Activated CD4-positive, alpha-beta T cell treated with anti-CD3 and anti-CD28 coated beads for 36 hours (primary cell): ENCODE measurements at regions of chr2 and their contacts with region 1.

Region 1: GRCh38 chr2:26959331-26959730 is 11.1 kb upstream of the MAPRE3 start:
- DNase-seq: no peak
- ATAC-seq: no peak
- H3K4me3 Mint-ChIP-seq: no peak overlapping the region
- H3K27ac Mint-ChIP-seq: no peak overlapping the region
- H3K4me1 Mint-ChIP-seq: no peaks in the 10 kb centered on the region
- H3K27me3 Mint-ChIP-seq: peaks cover 27% of the 10 kb centered on the region

Region 2: DNA sequence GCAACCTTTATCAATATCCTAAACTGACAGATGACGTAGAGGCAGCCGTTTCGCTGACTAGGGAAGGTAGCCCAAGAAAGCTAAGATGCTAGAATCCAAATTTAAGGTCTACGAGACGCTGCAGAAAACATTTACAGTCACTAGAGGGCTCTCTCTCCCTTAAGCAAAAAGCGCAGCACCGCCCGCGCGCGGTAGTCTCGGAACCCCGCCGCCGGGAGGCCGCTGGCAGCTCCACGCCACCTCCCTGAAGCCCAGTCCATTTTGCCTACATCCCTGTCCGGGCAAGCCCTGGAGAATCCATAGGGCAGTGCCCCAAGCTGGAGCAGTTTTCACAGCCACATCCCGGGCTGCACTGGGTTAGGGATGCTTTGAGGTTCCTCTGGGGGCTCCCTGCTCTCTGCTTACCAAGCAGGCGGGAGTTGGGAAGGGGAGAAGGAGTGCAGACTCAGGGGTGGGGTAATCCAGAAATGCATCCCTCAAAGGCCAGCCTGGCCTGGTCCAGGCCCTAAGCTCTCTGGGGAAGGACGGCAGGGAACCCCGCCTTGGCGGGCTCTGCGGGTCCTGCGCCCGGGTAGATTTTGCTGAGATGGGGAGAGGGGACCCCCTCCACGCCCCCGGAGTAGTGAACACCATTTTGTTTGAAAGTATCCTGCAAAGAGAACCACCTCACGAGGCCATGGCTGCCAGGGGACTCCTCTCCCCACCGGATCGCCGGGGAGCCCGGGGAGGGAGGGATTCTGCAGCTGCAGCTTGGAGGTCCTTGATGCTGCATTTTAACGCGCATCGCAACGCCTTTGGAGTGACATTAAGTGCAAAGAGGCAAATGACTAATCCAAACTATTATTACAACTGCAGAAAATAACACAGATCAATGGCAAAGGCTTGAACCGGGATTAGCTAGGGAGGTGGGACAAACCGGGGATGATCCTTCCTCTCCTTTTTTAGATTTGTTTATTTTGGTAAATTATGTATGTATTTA is 112.7 kb before region 1 on chr2:
- CTCF ChIA-PET with region 1: interaction called, 10 read pairs
- POLR2A ChIA-PET with region 1: no interaction called
- intact Hi-C with region 1: no loop called
- DNase-seq: peak; percentile 80
- ATAC-seq: peak; percentile 75
- H3K4me3 Mint-ChIP-seq: peak overlapping the region; percentile 36
- H3K27ac Mint-ChIP-seq: no peak overlapping the region
- H3K4me1 Mint-ChIP-seq: peaks cover 11% of the 10 kb centered on the region
- H3K27me3 Mint-ChIP-seq: peaks cover 42% of the 10 kb centered on the region

Region 3: DNA sequence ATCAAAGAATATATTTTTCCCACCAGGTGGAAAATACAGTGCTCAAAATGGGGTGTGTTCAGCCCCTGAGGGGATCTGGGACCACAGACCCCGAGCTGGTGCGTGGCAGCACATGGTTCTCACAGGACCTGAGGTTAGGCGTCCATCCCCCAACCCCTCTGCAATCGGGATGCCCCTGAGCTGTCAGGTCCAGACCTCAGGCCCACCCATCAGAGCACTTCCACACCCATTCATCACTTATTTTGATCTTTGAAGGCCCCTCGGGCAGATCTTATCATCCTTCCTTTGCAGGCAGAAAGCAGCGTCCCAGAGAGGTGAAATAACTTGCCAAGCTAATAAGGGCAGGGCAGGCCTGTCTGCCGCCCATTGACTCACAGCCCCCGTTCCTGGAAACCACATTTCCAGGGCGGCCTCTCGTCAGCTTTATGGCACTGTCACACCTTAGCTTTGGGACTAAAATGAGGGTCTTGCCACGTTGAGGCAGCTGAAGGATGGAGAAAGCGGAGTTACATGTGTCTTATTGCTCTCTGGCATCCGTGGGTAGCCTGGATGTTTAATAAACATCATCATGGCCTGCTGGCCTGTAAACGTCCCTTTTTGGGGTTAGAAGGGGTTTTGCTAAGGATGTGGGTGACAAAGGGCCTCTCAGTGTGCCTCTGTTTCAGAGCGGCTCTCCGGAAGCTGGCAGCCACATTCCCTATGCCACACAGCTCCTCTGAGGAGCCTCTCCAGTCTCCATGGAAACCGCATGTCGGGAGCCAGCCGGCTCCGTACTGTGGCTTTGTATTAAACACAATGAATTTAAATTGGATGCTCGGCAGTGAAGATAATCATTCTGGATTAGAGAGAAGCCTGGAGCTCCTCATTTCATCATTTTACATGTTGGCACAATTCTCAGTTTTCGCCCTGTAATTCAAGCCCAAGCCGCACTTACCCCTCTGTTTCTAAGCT is 47.1 kb before region 1 on chr2:
- CTCF ChIA-PET with region 1: no interaction called
- POLR2A ChIA-PET with region 1: no interaction called
- intact Hi-C with region 1: no loop called
- DNase-seq: no peak
- ATAC-seq: no peak
- H3K4me3 Mint-ChIP-seq: no peak overlapping the region
- H3K27ac Mint-ChIP-seq: no peak overlapping the region
- H3K4me1 Mint-ChIP-seq: no peaks in the 10 kb centered on the region
- H3K27me3 Mint-ChIP-seq: peaks cover 12% of the 10 kb centered on the region

Region 4: GRCh38 chr2:26976237-26976636 is 16.9 kb after region 1 on chr2:
- CTCF ChIA-PET with region 1: interaction called, 15 read pairs
- POLR2A ChIA-PET with region 1: no interaction called
- intact Hi-C with region 1: no loop called
- DNase-seq: no peak
- ATAC-seq: no peak
- H3K4me3 Mint-ChIP-seq: no peak overlapping the region
- H3K27ac Mint-ChIP-seq: no peak overlapping the region
- H3K4me1 Mint-ChIP-seq: peaks cover 6% of the 10 kb centered on the region
- H3K27me3 Mint-ChIP-seq: no peaks in the 10 kb centered on the region

Region 5: GRCh38 chr2:27016801-27017325 is 57.5 kb after region 1 on chr2:
- CTCF ChIA-PET with region 1: interaction called, 129 read pairs
- POLR2A ChIA-PET with region 1: no interaction called
- intact Hi-C with region 1: loop called (anchors 1 kb)
- DNase-seq: peak; percentile 69
- ATAC-seq: peak; percentile 55
- H3K4me3 Mint-ChIP-seq: no peak overlapping the region
- H3K27ac Mint-ChIP-seq: no peak overlapping the region
- H3K4me1 Mint-ChIP-seq: no peaks in the 10 kb centered on the region
- H3K27me3 Mint-ChIP-seq: no peaks in the 10 kb centered on the region

Region 6: GRCh38 chr2:27086090-27086723 is 126.9 kb after region 1 on chr2:
- CTCF ChIA-PET with region 1: interaction called, 4 read pairs
- POLR2A ChIA-PET with region 1: no interaction called
- intact Hi-C with region 1: loop called (anchors 1 to 5 kb)
- DNase-seq: peak; percentile 98
- ATAC-seq: peak; percentile 89
- H3K4me3 Mint-ChIP-seq: peak overlapping the region; percentile 77
- H3K27ac Mint-ChIP-seq: peak overlapping the region; percentile 82
- H3K4me1 Mint-ChIP-seq: peaks cover 24% of the 10 kb centered on the region
- H3K27me3 Mint-ChIP-seq: no peaks in the 10 kb centered on the region

Region 7: DNA sequence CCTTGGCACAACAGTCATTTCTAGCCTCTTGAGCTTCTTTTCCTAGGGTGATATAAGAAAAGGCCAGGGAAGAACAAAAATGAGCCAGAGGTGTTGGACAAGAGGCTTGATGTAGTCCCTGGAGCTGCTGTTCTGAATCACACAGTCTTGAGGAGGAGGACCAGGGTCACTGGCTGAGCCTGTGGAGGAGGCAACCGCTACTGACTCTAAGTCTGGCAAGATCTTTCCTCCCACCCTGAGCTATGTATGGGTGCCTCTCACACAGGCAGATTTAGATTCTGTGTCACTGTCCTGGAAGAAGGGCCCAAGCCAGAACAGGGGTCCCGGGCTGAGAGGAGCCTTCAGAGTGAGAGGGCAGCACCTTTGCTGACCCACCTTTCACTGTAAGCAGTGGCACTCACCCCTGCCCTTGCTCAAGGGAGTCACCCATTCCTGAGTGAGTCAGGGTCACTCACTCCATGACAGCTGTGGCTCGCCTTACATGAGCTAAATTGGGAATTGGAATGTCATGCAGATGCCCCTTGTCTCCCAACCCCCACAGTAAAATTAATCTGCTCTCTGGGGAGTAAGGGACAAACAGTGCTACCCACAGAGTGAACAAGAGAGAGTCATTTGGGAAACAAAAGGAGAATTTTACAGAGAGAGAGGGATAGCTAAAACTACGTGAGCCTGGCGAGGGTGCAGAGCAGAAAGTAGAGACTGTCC is 322.7 kb after region 1 on chr2 and contains the start of gene TRIM54:
- CTCF ChIA-PET with region 1: interaction called, 19 read pairs
- POLR2A ChIA-PET with region 1: no interaction called
- intact Hi-C with region 1: loop called (anchors 1 kb)
- DNase-seq: no peak
- ATAC-seq: no peak
- H3K4me3 Mint-ChIP-seq: no peak within 1 kb of the TSS
- H3K27ac Mint-ChIP-seq: no peak within 1 kb of the TSS
- H3K4me1 Mint-ChIP-seq: peaks cover 4% of the 10 kb centered on the region
- H3K27me3 Mint-ChIP-seq: peaks cover 15% of the 10 kb centered on the region
- total RNA-seq, gene TRIM54: 0.09 to 0.11 TPM